Caco-2 (cell line): ENCODE measurements at regions of chr1 and their contacts with region 1.

Region 1: DNA sequence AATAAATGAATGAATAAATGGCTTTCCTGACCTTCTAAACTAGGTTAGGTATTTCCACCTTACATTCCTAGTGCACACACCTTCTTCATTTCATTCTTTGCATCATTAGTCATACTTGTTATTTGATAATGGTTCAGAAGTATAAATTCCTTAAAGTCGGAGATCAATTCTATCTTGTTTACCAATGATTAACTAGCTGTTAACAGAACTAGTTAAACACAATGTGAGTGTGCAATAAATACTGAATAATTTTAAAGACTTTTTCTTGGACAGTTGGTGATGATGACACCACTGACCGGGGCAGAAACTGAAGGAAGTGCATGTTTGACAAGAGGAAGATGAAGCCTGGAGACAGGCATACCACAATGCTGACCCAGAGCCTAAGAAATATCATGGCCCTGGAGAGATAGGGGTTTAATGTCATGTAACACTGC is 207.1 kb upstream of the DEPDC1 start:
- DNase-seq: peak in 1 of 2 experiments; percentile 7
- H3K4me3 ChIP-seq: no peak overlapping the region
- H3K4me3 Mint-ChIP-seq: no peak overlapping the region
- H3K27ac Mint-ChIP-seq: no peak overlapping the region
- H3K4me1 ChIP-seq: peaks cover 17% of the 10 kb centered on the region
- H3K4me1 Mint-ChIP-seq: no peaks in the 10 kb centered on the region
- H3K27me3 ChIP-seq: no peaks in the 10 kb centered on the region
- H3K27me3 Mint-ChIP-seq: no peaks in the 10 kb centered on the region
- CTCF ChIP-seq: no peak

Region 2: GRCh38 chr1:68496680-68497357 is 207.1 kb before region 1 on chr1 and contains the start of gene DEPDC1:
- CTCF ChIA-PET with region 1: no interaction called
- POLR2A ChIA-PET with region 1: no interaction called
- intact Hi-C with region 1: loop called (anchors 1 kb)
- DNase-seq: peak; percentile 93 to 94
- H3K4me3 ChIP-seq: peak within 1 kb of the TSS; percentile 83
- H3K4me3 Mint-ChIP-seq: peak within 1 kb of the TSS; percentile 79
- H3K27ac Mint-ChIP-seq: peak within 1 kb of the TSS; percentile 78
- H3K4me1 ChIP-seq: peaks cover 5% of the 10 kb centered on the region; the same call in 1 of the 2 replicates
- H3K4me1 Mint-ChIP-seq: peaks cover 6% of the 10 kb centered on the region
- H3K27me3 ChIP-seq: no peaks in the 10 kb centered on the region
- H3K27me3 Mint-ChIP-seq: no peaks in the 10 kb centered on the region
- CTCF ChIP-seq: no peak
- total RNA-seq, gene DEPDC1: 19.9 and 20.3 TPM in 2 replicates

Region 3: GRCh38 chr1:68831281-68831680 is 127.3 kb after region 1 on chr1:
- CTCF ChIA-PET with region 1: no interaction called
- POLR2A ChIA-PET with region 1: no interaction called
- intact Hi-C with region 1: no loop called
- DNase-seq: no peak
- H3K4me3 ChIP-seq: no peak overlapping the region
- H3K4me3 Mint-ChIP-seq: no peak overlapping the region
- H3K27ac Mint-ChIP-seq: no peak overlapping the region
- H3K4me1 ChIP-seq: no peaks in the 10 kb centered on the region
- H3K4me1 Mint-ChIP-seq: no peaks in the 10 kb centered on the region
- H3K27me3 ChIP-seq: no peaks in the 10 kb centered on the region
- H3K27me3 Mint-ChIP-seq: no peaks in the 10 kb centered on the region
- CTCF ChIP-seq: no peak